ENCODE measurements at regions of chr21 and their contacts with region 1.

Region 1: GRCh38 chr21:37220981-37221664 is 46.0 kb downstream of the VPS26C start:
- DNase-seq: peak; percentile 95 to 97
- H3K4me3 ChIP-seq: peak overlapping the region; percentile 79
- H3K4me3 Mint-ChIP-seq: peak overlapping the region; percentile 93
- H3K27ac Mint-ChIP-seq: peak overlapping the region; percentile 94
- H3K4me1 ChIP-seq: no peaks in the 10 kb centered on the region
- H3K4me1 Mint-ChIP-seq: peaks cover 11% of the 10 kb centered on the region
- H3K27me3 ChIP-seq: no peaks in the 10 kb centered on the region
- H3K27me3 Mint-ChIP-seq: no peaks in the 10 kb centered on the region
- CTCF ChIP-seq: peak in 1 of 2 experiments; percentile 48

Region 2: DNA sequence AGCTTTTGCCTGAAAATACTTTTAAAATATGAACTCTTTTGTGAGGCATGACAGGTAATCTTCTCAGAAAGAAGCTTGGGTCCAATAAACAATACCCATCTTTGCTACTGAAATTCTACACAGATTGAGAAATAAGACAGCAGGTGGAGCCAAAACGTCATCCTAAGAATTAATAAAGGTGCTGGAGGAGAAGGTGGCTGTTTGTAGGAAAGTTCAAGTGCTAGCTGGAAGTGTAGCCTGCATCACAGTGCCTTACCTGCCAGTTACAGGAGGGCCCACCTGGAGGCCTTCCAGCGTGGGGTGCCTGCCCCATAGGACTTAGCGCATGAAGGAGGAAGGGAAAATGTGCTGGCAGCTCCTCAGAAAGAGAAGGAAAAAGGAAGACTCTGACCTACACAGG is 54.4 kb before region 1 on chr21:
- CTCF ChIA-PET with region 1: no interaction called
- POLR2A ChIA-PET with region 1: no interaction called
- intact Hi-C with region 1: loop called (anchors 2 kb)
- DNase-seq: peak in 1 of 2 experiments; percentile 17
- H3K4me3 ChIP-seq: no peak overlapping the region
- H3K4me3 Mint-ChIP-seq: no peak overlapping the region
- H3K27ac Mint-ChIP-seq: no peak overlapping the region
- H3K4me1 ChIP-seq: no peaks in the 10 kb centered on the region
- H3K4me1 Mint-ChIP-seq: no peaks in the 10 kb centered on the region
- H3K27me3 ChIP-seq: no peaks in the 10 kb centered on the region
- H3K27me3 Mint-ChIP-seq: no peaks in the 10 kb centered on the region
- CTCF ChIP-seq: no peak

Region 3: GRCh38 chr21:37184784-37185593 is 36.1 kb before region 1 on chr21:
- CTCF ChIA-PET with region 1: no interaction called
- POLR2A ChIA-PET with region 1: no interaction called
- intact Hi-C with region 1: no loop called
- DNase-seq: no peak
- H3K4me3 ChIP-seq: no peak overlapping the region
- H3K4me3 Mint-ChIP-seq: no peak overlapping the region
- H3K27ac Mint-ChIP-seq: no peak overlapping the region
- H3K4me1 ChIP-seq: no peaks in the 10 kb centered on the region
- H3K4me1 Mint-ChIP-seq: no peaks in the 10 kb centered on the region
- H3K27me3 ChIP-seq: no peaks in the 10 kb centered on the region
- H3K27me3 Mint-ChIP-seq: no peaks in the 10 kb centered on the region
- CTCF ChIP-seq: no peak

Region 4: GRCh38 chr21:37257967-37258877 is 37.1 kb after region 1 on chr21:
- CTCF ChIA-PET with region 1: no interaction called
- POLR2A ChIA-PET with region 1: interaction called, 5 read pairs
- intact Hi-C with region 1: loop called (anchors 2 kb)
- DNase-seq: peak; percentile 78 to 85
- H3K4me3 ChIP-seq: peak overlapping the region; percentile 61
- H3K4me3 Mint-ChIP-seq: peak overlapping the region; percentile 94
- H3K27ac Mint-ChIP-seq: peak overlapping the region; percentile 96
- H3K4me1 ChIP-seq: no peaks in the 10 kb centered on the region
- H3K4me1 Mint-ChIP-seq: no peaks in the 10 kb centered on the region
- H3K27me3 ChIP-seq: no peaks in the 10 kb centered on the region
- H3K27me3 Mint-ChIP-seq: no peaks in the 10 kb centered on the region
- CTCF ChIP-seq: no peak

Region 5: GRCh38 chr21:37582590-37582989 is 361.5 kb after region 1 on chr21:
- CTCF ChIA-PET with region 1: no interaction called
- POLR2A ChIA-PET with region 1: no interaction called
- intact Hi-C with region 1: loop called (anchors 1 kb)
- DNase-seq: peak; percentile 61
- H3K4me3 ChIP-seq: no peak overlapping the region
- H3K4me3 Mint-ChIP-seq: no peak overlapping the region
- H3K27ac Mint-ChIP-seq: no peak overlapping the region
- H3K4me1 ChIP-seq: peaks cover 2% of the 10 kb centered on the region
- H3K4me1 Mint-ChIP-seq: peaks cover 9% of the 10 kb centered on the region
- H3K27me3 ChIP-seq: no peaks in the 10 kb centered on the region
- H3K27me3 Mint-ChIP-seq: no peaks in the 10 kb centered on the region
- CTCF ChIP-seq: peak; percentile 70 to 77